T-cell (primary cell): ENCODE measurements at regions of chr20 and their contacts with region 1.

Region 1: GRCh38 chr20:45317826-45318225 is 9.7 kb upstream of the MATN4 start:
- DNase-seq: no peak
- ATAC-seq: no peak
- H3K4me3 ChIP-seq: no peak overlapping the region
- H3K4me3 Mint-ChIP-seq: no peak overlapping the region
- H3K27ac ChIP-seq: no peak overlapping the region
- H3K27ac Mint-ChIP-seq: no peak overlapping the region
- H3K4me1 ChIP-seq: peaks cover 13 to 33% of the 10 kb centered on the region in 2 experiments
- H3K4me1 Mint-ChIP-seq: peaks cover 21 to 38% (median 30%) of the 10 kb centered on the region in 3 donors
- H3K27me3 ChIP-seq: peaks cover 4 to 34% of the 10 kb centered on the region in 2 experiments
- H3K27me3 Mint-ChIP-seq: peaks cover 28 to 32% of the 10 kb centered on the region in 2 donors

Region 2: DNA sequence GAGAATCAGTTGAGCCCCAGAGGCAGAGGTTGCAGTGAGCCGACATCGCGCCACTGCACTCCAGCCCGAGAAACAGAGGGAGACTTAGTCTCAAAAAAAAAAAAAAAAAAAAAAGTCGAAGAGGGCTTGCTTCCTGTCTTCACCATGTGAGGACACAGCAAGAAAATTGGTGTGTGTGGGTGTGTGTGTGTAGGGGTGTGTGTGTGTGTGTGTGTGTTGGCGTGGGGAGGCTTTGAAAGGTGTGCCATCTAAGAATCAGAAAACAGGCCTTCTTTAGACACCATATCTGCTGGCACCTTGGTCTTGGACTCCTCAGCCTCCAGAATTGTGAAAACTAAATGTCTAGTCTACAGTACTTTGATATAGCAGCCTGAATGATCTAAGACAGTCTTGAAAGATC is 18.0 kb before region 1 on chr20:
- CTCF ChIA-PET with region 1: interaction called, 3 to 10 read pairs
- POLR2A ChIA-PET with region 1: no interaction called
- DNase-seq: no peak
- ATAC-seq: no peak
- H3K4me3 ChIP-seq: no peak overlapping the region
- H3K4me3 Mint-ChIP-seq: no peak overlapping the region
- H3K27ac ChIP-seq: no peak overlapping the region
- H3K27ac Mint-ChIP-seq: no peak overlapping the region
- H3K4me1 ChIP-seq: no peaks in the 10 kb centered on the region
- H3K4me1 Mint-ChIP-seq: peaks cover 0 to 3% (median 0%) of the 10 kb centered on the region in 3 donors
- H3K27me3 ChIP-seq: peaks cover 3 to 43% of the 10 kb centered on the region in 2 experiments
- H3K27me3 Mint-ChIP-seq: peaks cover 36 to 55% of the 10 kb centered on the region in 2 donors

Region 3: GRCh38 chr20:45495501-45495941 is 177.7 kb after region 1 on chr20:
- CTCF ChIA-PET with region 1: no interaction called
- POLR2A ChIA-PET with region 1: no interaction called
- DNase-seq: no peak
- ATAC-seq: no peak
- H3K4me3 ChIP-seq: no peak overlapping the region
- H3K4me3 Mint-ChIP-seq: no peak overlapping the region
- H3K27ac ChIP-seq: no peak overlapping the region
- H3K27ac Mint-ChIP-seq: no peak overlapping the region
- H3K4me1 ChIP-seq: no peaks in the 10 kb centered on the region
- H3K4me1 Mint-ChIP-seq: no peaks in the 10 kb centered on the region
- H3K27me3 ChIP-seq: peaks cover 3 to 25% of the 10 kb centered on the region in 2 experiments
- H3K27me3 Mint-ChIP-seq: peaks cover 26 to 38% of the 10 kb centered on the region in 2 donors